MCF 10A (cell line): ENCODE measurements at regions of chr13 and their contacts with region 1.

Region 1: GRCh38 chr13:109156181-109156935 is 526.9 kb downstream of the MYO16 start:
- DNase-seq: peak; percentile 82
- H3K4me3 Mint-ChIP-seq: peak overlapping the region; percentile 64
- H3K27ac Mint-ChIP-seq: peak overlapping the region; percentile 95
- H3K4me1 Mint-ChIP-seq: peaks cover 61% of the 10 kb centered on the region
- H3K27me3 Mint-ChIP-seq: no peaks in the 10 kb centered on the region
- CTCF ChIP-seq: no peak

Region 2: DNA sequence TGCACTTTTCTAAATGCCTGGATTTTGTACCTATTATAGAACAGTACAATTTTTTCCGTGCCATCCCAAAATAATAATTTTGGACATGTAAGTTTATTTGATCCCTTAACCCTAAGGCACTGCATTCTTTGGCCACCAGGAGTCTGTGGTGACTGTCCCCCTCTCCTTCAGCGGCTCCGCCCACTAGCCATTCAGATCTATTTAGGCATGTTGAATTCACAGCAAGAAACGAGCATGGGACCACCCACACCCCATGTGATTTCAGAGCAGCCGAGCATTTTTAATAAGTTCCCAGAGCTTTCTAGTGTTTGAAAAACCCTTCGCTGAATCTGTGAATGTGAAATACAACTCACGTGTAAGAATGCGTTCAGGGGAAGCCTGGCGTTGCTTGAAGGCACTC is 40.6 kb after region 1 on chr13:
- CTCF ChIA-PET with region 1: interaction called, 3 read pairs
- POLR2A ChIA-PET with region 1: interaction called, 23 read pairs
- intact Hi-C with region 1: no loop called
- DNase-seq: no peak
- H3K4me3 Mint-ChIP-seq: no peak overlapping the region
- H3K27ac Mint-ChIP-seq: no peak overlapping the region
- H3K4me1 Mint-ChIP-seq: peaks cover 6% of the 10 kb centered on the region
- H3K27me3 Mint-ChIP-seq: no peaks in the 10 kb centered on the region
- CTCF ChIP-seq: no peak